CD8-positive, alpha-beta memory T cell (primary cell): ENCODE measurements at regions of chr18 and their contacts with region 1.

Region 1: DNA sequence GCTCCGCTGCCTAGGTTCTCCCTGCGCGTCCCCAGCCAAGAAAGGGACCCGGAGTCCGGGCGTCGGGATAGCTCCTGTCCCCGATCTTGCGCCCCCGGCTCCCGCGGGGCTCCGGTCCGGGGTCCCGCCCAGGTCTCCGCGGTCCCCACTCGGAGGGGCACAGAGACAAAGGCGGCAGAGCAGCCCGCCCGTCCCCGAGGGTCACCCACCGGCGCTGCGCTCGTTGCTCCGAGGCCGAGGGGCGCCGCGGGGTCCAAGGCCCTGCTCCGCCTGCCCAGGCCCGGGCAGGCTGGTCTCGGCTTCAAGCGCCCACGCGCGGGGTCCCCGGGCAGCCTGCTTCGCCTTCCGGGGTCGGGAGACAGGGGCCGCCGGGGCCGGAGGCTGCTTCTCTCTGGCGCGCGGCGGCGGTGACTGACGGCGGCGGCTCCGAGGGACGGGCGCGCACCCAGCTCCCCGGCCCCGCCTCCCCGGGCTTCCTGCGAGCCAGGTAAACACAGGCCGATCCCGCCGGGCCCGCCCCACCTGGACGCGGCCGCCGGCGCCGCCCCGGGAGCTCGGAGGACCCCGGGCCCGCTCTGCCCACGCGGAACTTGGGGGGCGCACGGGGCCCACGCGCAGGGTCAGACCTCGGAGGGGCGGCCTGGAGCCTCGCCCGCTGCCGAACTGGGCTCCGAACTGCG is at the start of gene MBP:
- DNase-seq: peak; percentile 59 to 77 (median 66)
- H3K4me3 ChIP-seq: peak within 1 kb of the TSS; percentile 75
- H3K4me3 Mint-ChIP-seq: peak within 1 kb of the TSS; percentile 97 to 100 (median 98)
- H3K27ac ChIP-seq: peak within 1 kb of the TSS; percentile 71
- H3K27ac Mint-ChIP-seq: peak within 1 kb of the TSS; percentile 82 to 98 (median 96)
- H3K4me1 ChIP-seq: peaks cover 44% of the 10 kb centered on the region
- H3K4me1 Mint-ChIP-seq: peaks cover 49 to 53% (median 50%) of the 10 kb centered on the region in 3 donors
- H3K27me3 ChIP-seq: no peaks in the 10 kb centered on the region
- H3K27me3 Mint-ChIP-seq: no peaks in the 10 kb centered on the region
- total RNA-seq, gene MBP: 59.5 to 60.0 TPM

Region 2: DNA sequence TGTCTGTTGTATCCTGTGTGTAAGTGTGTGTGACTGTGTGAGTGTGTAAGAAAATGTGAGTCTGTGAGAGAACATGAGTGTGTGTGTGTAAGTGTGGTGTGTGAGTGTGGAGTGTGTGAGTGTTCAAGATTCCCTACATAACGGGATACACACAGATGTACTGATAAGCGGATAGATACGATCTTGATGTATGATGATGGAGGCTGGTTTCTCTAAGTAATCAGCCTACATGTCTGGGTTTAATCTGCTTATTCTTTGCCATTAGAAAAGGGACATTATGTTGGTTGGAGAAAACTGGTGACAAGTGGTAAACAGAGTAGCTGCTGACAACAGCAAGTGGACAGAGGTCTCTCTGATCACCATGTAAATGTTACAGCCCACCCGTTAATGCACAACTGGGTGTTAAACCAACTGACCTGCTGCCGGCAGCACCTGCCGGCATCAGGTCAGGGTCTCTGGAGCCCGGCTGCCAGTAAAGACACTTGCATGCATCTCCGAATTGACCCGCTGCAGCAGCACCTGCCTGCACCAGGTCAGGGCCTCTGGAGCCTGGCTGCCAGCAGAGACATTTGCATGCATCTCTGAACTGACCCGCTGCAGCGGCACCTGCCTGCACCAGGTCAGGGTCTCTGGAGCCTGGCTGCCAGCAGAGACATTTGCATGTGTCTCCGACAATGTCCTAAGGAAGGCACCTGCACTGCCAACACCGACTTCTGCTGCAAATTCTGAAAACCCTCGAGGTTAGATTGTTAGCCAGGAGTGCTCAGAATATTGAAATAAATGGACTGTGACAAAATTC is 87.4 kb before region 1 on chr18:
- CTCF ChIA-PET with region 1: no interaction called
- POLR2A ChIA-PET with region 1: no interaction called
- DNase-seq: no peak
- H3K4me3 ChIP-seq: no peak overlapping the region
- H3K4me3 Mint-ChIP-seq: no peak overlapping the region
- H3K27ac ChIP-seq: no peak overlapping the region
- H3K27ac Mint-ChIP-seq: peak overlapping the region in 6 of 8 donors; percentile 28 to 86 (median 37)
- H3K4me1 ChIP-seq: no peaks in the 10 kb centered on the region
- H3K4me1 Mint-ChIP-seq: peaks cover 39 to 74% (median 62%) of the 10 kb centered on the region in 3 donors
- H3K27me3 ChIP-seq: no peaks in the 10 kb centered on the region
- H3K27me3 Mint-ChIP-seq: peaks cover 0 to 1% of the 10 kb centered on the region in 2 donors

Region 3: GRCh38 chr18:77061946-77062517 is 70.5 kb before region 1 on chr18:
- CTCF ChIA-PET with region 1: interaction called, 5 read pairs
- POLR2A ChIA-PET with region 1: interaction called, 30 read pairs
- DNase-seq: no peak
- H3K4me3 ChIP-seq: peak overlapping the region; percentile 41
- H3K4me3 Mint-ChIP-seq: peak overlapping the region; percentile 43 to 86 (median 81)
- H3K27ac ChIP-seq: peak overlapping the region; percentile 73
- H3K27ac Mint-ChIP-seq: peak overlapping the region; percentile 93 to 99 (median 98)
- H3K4me1 ChIP-seq: peaks cover 89% of the 10 kb centered on the region
- H3K4me1 Mint-ChIP-seq: peaks cover 85 to 89% (median 89%) of the 10 kb centered on the region in 3 donors
- H3K27me3 ChIP-seq: no peaks in the 10 kb centered on the region
- H3K27me3 Mint-ChIP-seq: no peaks in the 10 kb centered on the region

Region 4: DNA sequence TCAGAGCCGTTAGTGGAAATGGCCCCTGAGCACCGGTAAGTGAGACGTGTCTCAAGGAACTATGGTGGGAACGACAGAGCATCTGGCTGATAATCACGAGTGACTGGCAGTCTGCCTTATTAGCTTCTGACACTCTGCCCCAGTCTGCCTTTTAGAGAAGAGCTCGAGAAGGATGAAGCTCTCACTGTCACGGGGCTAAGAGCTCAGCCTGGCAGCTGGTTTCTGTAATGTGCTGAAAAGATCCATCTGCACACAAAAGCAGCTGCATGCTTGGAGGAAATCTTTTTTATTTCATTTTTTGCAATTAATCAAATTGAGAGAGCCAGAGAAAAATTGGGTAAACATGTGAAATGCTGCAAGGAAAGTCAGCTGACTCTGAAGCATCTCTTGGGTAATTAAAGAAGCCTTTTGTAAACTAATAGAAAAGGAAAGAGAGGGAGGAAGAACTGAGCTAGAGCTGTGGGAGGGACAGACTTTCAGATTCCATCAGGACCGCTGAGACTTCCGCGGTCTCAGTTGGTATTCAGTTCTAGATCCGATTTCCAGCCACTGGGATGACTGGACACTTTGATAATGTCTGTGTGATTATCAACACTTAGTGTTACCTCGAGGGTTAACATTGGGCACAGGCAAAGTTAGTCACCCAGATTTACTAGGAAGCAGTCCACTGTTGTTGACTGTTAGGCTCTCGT is 24.4 kb before region 1 on chr18:
- CTCF ChIA-PET with region 1: interaction called, 6 read pairs
- POLR2A ChIA-PET with region 1: interaction called, 13 read pairs
- DNase-seq: no peak
- H3K4me3 ChIP-seq: no peak overlapping the region
- H3K4me3 Mint-ChIP-seq: peak overlapping the region; percentile 26 to 74 (median 69)
- H3K27ac ChIP-seq: no peak overlapping the region
- H3K27ac Mint-ChIP-seq: peak overlapping the region; percentile 82 to 98 (median 96)
- H3K4me1 ChIP-seq: peaks cover 63% of the 10 kb centered on the region
- H3K4me1 Mint-ChIP-seq: peaks cover 90 to 99% (median 98%) of the 10 kb centered on the region in 3 donors
- H3K27me3 ChIP-seq: no peaks in the 10 kb centered on the region
- H3K27me3 Mint-ChIP-seq: no peaks in the 10 kb centered on the region

Region 5: GRCh38 chr18:77320971-77321559 is 188.6 kb after region 1 on chr18:
- CTCF ChIA-PET with region 1: no interaction called
- POLR2A ChIA-PET with region 1: no interaction called
- DNase-seq: no peak
- H3K4me3 ChIP-seq: no peak overlapping the region
- H3K4me3 Mint-ChIP-seq: no peak overlapping the region
- H3K27ac ChIP-seq: no peak overlapping the region
- H3K27ac Mint-ChIP-seq: no peak overlapping the region
- H3K4me1 ChIP-seq: no peaks in the 10 kb centered on the region
- H3K4me1 Mint-ChIP-seq: no peaks in the 10 kb centered on the region
- H3K27me3 ChIP-seq: no peaks in the 10 kb centered on the region
- H3K27me3 Mint-ChIP-seq: peaks cover 14 to 66% of the 10 kb centered on the region in 2 donors

Region 6: DNA sequence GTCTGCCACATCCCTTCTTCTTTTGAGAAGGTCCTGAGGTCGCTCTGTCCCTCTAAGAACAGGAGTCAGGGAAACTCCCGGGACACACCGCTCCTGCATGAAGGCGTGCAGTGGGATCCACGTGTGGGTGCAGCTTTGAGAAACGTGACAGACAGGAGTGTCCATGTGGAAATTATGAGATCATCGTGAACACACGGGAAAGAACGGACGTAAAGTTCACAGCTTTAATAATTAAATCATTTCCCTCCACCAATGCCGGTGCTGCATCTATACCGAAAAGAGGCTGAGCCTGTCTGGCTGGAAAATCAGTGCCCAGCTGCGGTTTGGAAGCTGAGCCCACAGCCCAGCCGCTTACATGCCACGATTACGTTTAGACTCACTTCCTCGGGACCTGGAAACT is 1474.7 kb after region 1 on chr18:
- CTCF ChIA-PET with region 1: no interaction called
- POLR2A ChIA-PET with region 1: no interaction called
- DNase-seq: no peak
- H3K4me3 ChIP-seq: no peak overlapping the region
- H3K4me3 Mint-ChIP-seq: no peak overlapping the region
- H3K27ac ChIP-seq: no peak overlapping the region
- H3K27ac Mint-ChIP-seq: no peak overlapping the region
- H3K4me1 ChIP-seq: no peaks in the 10 kb centered on the region
- H3K4me1 Mint-ChIP-seq: no peaks in the 10 kb centered on the region
- H3K27me3 ChIP-seq: no peaks in the 10 kb centered on the region
- H3K27me3 Mint-ChIP-seq: peaks cover 0 to 3% of the 10 kb centered on the region in 2 donors